ENCODE measurements at regions of chr17 and their contacts with region 1.

Region 1: GRCh38 chr17:80426681-80427326 is 11.8 kb downstream of the ENDOV start:
- DNase-seq: peak; percentile 63 to 87 (median 75)
- ATAC-seq: peak; percentile 52 to 83 (median 80)
- H3K4me3 ChIP-seq: no peak overlapping the region
- H3K27ac ChIP-seq: no peak overlapping the region
- H3K4me1 ChIP-seq: peaks cover 0 to 20% (median 4%) of the 10 kb centered on the region in 12 donors
- H3K27me3 ChIP-seq: no peaks in the 10 kb centered on the region
- CTCF ChIP-seq: peak; percentile 91 to 99 (median 96)
- POLR2A ChIP-seq: no peak

Region 2: DNA sequence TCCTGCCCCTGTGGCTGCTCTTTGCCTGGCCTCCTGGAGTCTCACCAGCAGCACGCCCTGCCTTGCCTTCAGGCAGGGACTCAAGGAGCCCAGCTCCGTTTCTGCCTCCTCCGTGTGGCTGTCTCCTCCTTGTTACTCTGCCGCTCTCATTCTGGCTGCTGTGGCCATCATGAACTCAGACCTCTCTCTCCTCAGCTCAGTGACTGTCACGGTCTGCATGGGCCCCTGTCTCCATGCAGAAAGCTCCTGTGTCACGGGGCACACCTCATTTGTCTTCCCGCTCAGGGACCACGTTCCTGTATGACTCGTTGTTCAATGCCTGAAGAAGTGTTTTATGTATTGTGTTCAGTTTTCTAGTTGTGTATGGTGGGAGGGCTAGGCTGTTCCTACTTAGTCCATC is 143.1 kb after region 1 on chr17:
- intact Hi-C with region 1: loop called in 7 of 10 experiments (anchors 2 to 10 kb)
- DNase-seq: no peak
- ATAC-seq: no peak
- H3K4me3 ChIP-seq: no peak overlapping the region
- H3K27ac ChIP-seq: no peak overlapping the region
- H3K4me1 ChIP-seq: no peaks in the 10 kb centered on the region
- H3K27me3 ChIP-seq: no peaks in the 10 kb centered on the region
- CTCF ChIP-seq: no peak
- POLR2A ChIP-seq: no peak

Region 3: DNA sequence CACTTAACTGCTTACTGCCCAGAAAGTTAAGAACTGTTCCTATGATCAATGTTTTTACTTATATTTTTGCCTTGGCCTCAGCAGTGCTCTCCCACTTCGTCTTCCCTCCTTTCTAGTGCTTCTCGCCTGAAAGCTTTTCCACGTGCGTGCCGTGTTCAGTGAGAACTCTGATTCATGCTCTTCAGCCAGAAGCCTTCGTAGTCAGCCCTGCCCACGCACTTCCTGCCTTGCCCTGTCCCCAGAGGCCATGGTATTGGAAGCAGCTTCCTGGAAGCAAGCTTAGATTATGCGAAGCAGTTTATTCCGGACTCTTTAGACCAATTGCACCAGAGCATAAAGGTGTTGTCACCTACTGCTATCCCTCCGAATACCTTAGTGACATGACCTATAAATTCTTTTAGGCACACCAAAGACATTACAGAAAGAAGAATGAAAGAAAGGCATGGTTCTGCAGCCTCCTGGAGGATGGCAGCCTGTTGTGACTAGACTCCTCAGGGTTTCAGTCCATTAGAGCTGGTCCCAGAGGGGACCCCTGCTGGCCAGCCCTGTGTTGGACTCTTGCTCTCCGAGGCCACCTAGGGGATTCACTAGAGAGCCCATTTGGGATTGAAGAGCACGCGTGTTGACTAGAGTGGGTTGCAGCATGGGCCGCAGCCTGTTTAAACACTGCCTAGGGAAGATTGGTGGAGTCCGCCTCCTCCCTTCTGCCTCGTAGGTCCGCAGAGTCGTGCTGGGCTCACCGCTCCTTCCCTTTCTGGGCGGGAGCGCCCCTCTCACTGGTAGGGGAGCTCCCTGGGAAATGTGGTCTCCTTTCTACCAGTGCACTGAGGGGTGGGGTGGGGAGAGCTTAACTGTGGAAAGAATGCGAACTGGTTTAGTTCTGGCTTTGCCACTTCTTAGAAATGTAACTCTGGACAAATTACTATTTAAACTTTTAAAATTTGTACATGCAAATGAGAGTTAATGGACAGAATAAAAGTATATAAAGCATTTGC is 223.2 kb after region 1 on chr17:
- intact Hi-C with region 1: loop called in 1 of 10 experiments (anchors 10 kb)
- DNase-seq: peak; percentile 74 to 91 (median 84)
- ATAC-seq: peak; percentile 74 to 97 (median 92)
- H3K4me3 ChIP-seq: peak overlapping the region in 5 of 12 donors; percentile 5 to 25 (median 15)
- H3K27ac ChIP-seq: peak overlapping the region in 10 of 12 donors; percentile 33 to 83 (median 60)
- H3K4me1 ChIP-seq: peaks cover 4 to 25% (median 19%) of the 10 kb centered on the region in 12 donors
- H3K27me3 ChIP-seq: no peaks in the 10 kb centered on the region
- CTCF ChIP-seq: peak; percentile 22 to 79 (median 50)
- POLR2A ChIP-seq: no peak

Region 4: GRCh38 chr17:80866147-80866793 is 439.5 kb after region 1 on chr17:
- intact Hi-C with region 1: loop called in 3 of 10 experiments (anchors 10 kb)
- DNase-seq: peak; percentile 49 to 81 (median 58)
- ATAC-seq: peak in 3 of 4 donors; percentile 69 to 80 (median 77)
- H3K4me3 ChIP-seq: no peak overlapping the region
- H3K27ac ChIP-seq: no peak overlapping the region
- H3K4me1 ChIP-seq: peaks cover 0 to 21% (median 2%) of the 10 kb centered on the region in 12 donors
- H3K27me3 ChIP-seq: no peaks in the 10 kb centered on the region
- CTCF ChIP-seq: peak; percentile 58 to 90 (median 74)
- POLR2A ChIP-seq: no peak

Region 5: GRCh38 chr17:81094509-81095382 is 667.9 kb after region 1 on chr17:
- intact Hi-C with region 1: loop called in 2 of 10 experiments (anchors 10 kb)
- DNase-seq: peak in 4 of 5 donors; percentile 36 to 72 (median 52)
- ATAC-seq: peak in 3 of 4 donors; percentile 10 to 48 (median 11)
- H3K4me3 ChIP-seq: no peak overlapping the region
- H3K27ac ChIP-seq: peak overlapping the region in 4 of 12 donors; percentile 10 to 80 (median 24)
- H3K4me1 ChIP-seq: peaks cover 0 to 48% (median 15%) of the 10 kb centered on the region in 12 donors
- H3K27me3 ChIP-seq: no peaks in the 10 kb centered on the region
- CTCF ChIP-seq: no peak
- POLR2A ChIP-seq: no peak

Measured in heart left ventricle (tissue), 16 donors.